Naive thymus-derived CD4-positive, alpha-beta T cell (primary cell): ENCODE measurements at regions of chr5 and their contacts with region 1.

Region 1: GRCh38 chr5:80960531-80961375 is 590 bp downstream of the RASGRF2 start:
- DNase-seq: peak in 8 of 9 donors; percentile 23 to 67 (median 50)
- ATAC-seq: peak; percentile 53
- H3K4me3 ChIP-seq: peak overlapping the region; percentile 85
- H3K4me3 Mint-ChIP-seq: peak overlapping the region; percentile 87 to 99 (median 94)
- H3K27ac ChIP-seq: peak overlapping the region; percentile 70
- H3K27ac Mint-ChIP-seq: peak overlapping the region; percentile 79 to 98 (median 88)
- H3K4me1 ChIP-seq: peaks cover 22 to 35% of the 10 kb centered on the region in 2 donors
- H3K4me1 Mint-ChIP-seq: peaks cover 35 to 76% (median 63%) of the 10 kb centered on the region in 7 donors
- H3K27me3 ChIP-seq: no peaks in the 10 kb centered on the region
- H3K27me3 Mint-ChIP-seq: peaks cover 0 to 12% (median 5%) of the 10 kb centered on the region in 5 donors

Region 2: GRCh38 chr5:80231243-80231642 is 729.5 kb before region 1 on chr5:
- CTCF ChIA-PET with region 1: no interaction called
- POLR2A ChIA-PET with region 1: no interaction called
- intact Hi-C with region 1: no loop called
- DNase-seq: no peak
- ATAC-seq: no peak
- H3K4me3 ChIP-seq: no peak overlapping the region
- H3K4me3 Mint-ChIP-seq: peak overlapping the region in 8 of 10 donors; percentile 21 to 67 (median 52)
- H3K27ac ChIP-seq: peak overlapping the region; percentile 29
- H3K27ac Mint-ChIP-seq: peak overlapping the region in 7 of 9 donors; percentile 18 to 91 (median 74)
- H3K4me1 ChIP-seq: peaks cover 12 to 51% of the 10 kb centered on the region in 2 donors
- H3K4me1 Mint-ChIP-seq: peaks cover 51 to 92% (median 76%) of the 10 kb centered on the region in 7 donors
- H3K27me3 ChIP-seq: no peaks in the 10 kb centered on the region
- H3K27me3 Mint-ChIP-seq: no peaks in the 10 kb centered on the region

Region 3: DNA sequence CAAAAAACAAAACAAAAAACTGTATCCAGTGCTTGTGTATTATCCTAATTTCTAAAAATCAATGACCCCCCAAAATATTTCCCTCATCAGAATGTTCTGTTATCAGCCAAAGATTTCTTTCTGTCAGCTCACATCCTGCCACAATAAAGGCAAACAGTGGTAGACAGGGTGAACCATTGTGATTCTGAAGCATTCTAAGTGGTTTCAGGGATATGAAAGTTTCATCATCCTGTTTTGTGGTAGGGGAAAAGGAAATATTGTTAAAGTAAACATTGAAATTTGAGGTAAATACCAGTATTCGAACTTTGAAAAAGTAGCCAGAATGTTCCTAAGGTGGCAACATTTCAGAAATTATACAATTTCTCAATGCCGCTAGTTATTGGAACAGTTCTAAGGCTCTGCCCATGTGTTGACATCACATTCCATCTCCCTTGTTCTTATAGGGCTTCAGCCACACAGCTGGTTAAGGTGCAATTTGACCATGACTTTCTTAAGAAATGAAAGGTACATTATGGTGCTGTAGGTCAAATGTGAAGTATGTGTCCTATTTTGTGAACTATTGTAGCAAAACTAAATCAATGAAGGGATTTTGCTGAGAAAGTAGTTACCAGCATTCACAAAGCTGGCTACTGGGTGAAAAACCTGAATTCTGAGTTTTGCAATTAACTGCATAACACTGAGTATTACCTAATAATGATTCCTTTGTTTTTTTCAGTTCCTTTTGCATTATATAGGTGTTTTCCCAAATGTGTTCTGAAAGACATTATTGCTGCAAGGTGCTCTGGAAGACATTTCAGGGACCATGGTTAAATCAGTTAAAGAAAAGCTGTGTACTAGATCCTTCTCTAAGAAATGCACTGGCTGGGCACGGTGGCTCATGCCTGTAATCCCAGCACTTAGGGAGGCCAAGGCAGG is 108.2 kb before region 1 on chr5:
- CTCF ChIA-PET with region 1: no interaction called
- POLR2A ChIA-PET with region 1: no interaction called
- intact Hi-C with region 1: no loop called
- DNase-seq: no peak
- ATAC-seq: no peak
- H3K4me3 ChIP-seq: no peak overlapping the region
- H3K4me3 Mint-ChIP-seq: peak overlapping the region in 1 of 10 donors; percentile 11
- H3K27ac ChIP-seq: no peak overlapping the region
- H3K27ac Mint-ChIP-seq: peak overlapping the region in 2 of 9 donors; percentile 7 to 73
- H3K4me1 ChIP-seq: peaks cover 0 to 5% of the 10 kb centered on the region in 2 donors
- H3K4me1 Mint-ChIP-seq: peaks cover 0 to 21% (median 16%) of the 10 kb centered on the region in 7 donors
- H3K27me3 ChIP-seq: no peaks in the 10 kb centered on the region
- H3K27me3 Mint-ChIP-seq: no peaks in the 10 kb centered on the region

Region 4: DNA sequence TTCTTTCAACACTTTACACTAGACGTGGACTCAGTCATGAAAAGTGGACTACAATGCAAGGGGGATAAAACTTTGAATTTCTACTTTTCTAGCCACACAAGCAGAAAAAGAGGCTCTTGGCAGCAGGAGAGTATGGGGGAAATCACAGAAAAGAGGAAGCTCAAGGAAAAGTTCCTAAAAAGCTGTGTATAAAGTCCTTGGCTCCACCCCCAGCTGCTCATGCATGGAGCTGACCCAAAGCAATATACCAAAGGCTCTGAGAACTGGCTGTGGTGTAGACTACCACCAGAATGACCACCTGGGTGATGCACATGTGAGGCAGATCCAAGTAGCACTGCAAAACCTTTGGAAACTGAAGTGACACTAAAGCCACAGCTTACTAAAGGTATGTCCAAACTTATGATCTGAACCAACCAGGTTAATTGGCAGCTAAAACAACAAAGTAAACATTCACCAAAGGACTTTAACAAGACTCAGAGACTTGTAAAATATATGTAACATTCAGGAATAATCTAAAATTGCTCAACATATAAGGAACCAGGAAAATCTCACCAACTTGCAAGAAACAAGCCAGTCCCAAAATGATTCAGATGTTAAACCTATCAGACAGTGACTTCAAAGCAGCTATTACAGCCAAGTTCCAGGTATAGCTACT is 56.1 kb before region 1 on chr5:
- CTCF ChIA-PET with region 1: no interaction called
- POLR2A ChIA-PET with region 1: no interaction called
- intact Hi-C with region 1: no loop called
- DNase-seq: no peak
- ATAC-seq: no peak
- H3K4me3 ChIP-seq: no peak overlapping the region
- H3K4me3 Mint-ChIP-seq: no peak overlapping the region
- H3K27ac ChIP-seq: no peak overlapping the region
- H3K27ac Mint-ChIP-seq: no peak overlapping the region
- H3K4me1 ChIP-seq: no peaks in the 10 kb centered on the region
- H3K4me1 Mint-ChIP-seq: no peaks in the 10 kb centered on the region
- H3K27me3 ChIP-seq: no peaks in the 10 kb centered on the region
- H3K27me3 Mint-ChIP-seq: no peaks in the 10 kb centered on the region

Region 5: DNA sequence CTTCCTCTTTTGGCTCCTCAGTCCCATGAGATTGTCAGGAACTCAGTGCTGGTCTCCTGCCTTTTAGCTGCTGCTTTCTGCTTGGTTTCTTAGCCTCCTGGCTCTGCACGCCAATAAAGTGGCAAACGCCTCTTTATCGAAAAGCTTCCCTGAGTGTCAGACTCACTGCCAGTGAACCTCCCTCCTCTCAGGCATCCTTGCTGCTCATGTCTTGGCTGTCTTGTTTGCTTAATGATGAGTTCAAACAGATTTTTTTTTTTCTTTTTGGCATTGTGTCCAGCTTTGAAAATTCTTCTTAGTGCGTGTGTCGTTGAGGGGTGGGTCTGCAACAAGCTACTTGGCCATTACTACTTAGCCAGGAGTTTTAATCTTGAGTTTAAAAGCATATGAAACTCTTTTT is 14.3 kb after region 1 on chr5:
- CTCF ChIA-PET with region 1: no interaction called
- POLR2A ChIA-PET with region 1: interaction called, 3 read pairs
- intact Hi-C with region 1: loop called in 1 of 2 experiments (anchors 1 kb)
- DNase-seq: no peak
- ATAC-seq: no peak
- H3K4me3 ChIP-seq: no peak overlapping the region
- H3K4me3 Mint-ChIP-seq: peak overlapping the region in 5 of 10 donors; percentile 2 to 74 (median 8)
- H3K27ac ChIP-seq: no peak overlapping the region
- H3K27ac Mint-ChIP-seq: peak overlapping the region in 6 of 9 donors; percentile 20 to 86 (median 52)
- H3K4me1 ChIP-seq: peaks cover 11 to 47% of the 10 kb centered on the region in 2 donors
- H3K4me1 Mint-ChIP-seq: peaks cover 22 to 91% (median 84%) of the 10 kb centered on the region in 7 donors
- H3K27me3 ChIP-seq: no peaks in the 10 kb centered on the region
- H3K27me3 Mint-ChIP-seq: no peaks in the 10 kb centered on the region

Region 6: DNA sequence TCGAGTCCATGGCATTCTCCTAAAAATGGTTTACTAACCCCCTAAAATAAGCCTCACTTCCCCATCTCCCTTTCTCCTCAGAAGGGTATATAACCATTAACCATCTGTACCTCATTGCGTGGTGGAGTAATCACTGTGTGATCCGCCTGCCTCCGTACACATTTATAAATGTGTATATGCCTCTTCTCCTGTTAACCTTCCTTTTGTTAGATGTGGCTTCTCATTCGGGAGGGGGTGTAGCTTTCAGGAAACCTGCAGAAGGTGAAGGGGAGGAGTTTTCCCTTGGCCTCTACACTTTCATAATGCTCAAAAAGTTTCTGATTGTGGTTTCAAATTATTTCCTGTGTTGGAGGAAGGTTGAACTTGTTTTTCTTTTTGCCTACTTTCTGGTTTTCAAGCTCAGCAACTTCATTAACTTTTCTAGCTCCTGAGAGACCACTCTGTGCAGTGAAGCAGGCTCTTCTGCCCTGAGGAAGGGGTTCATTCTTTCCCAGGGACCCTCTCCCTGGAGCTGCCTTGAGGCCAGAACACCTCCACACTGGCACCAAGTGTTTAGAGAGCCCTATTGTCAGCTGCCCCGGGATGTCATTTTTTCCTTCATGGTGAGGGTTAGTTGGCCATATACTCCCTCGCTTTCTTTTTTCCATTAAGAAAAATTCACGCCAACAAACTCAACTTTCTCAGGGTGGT is 46.3 kb after region 1 on chr5:
- CTCF ChIA-PET with region 1: interaction called, 12 read pairs
- POLR2A ChIA-PET with region 1: interaction called, 25 read pairs
- intact Hi-C with region 1: loop called (anchors 1 kb)
- DNase-seq: peak in 8 of 9 donors; percentile 48 to 91 (median 88)
- ATAC-seq: peak; percentile 95
- H3K4me3 ChIP-seq: peak overlapping the region; percentile 53
- H3K4me3 Mint-ChIP-seq: peak overlapping the region; percentile 75 to 95 (median 89)
- H3K27ac ChIP-seq: peak overlapping the region; percentile 80
- H3K27ac Mint-ChIP-seq: peak overlapping the region; percentile 92 to 100 (median 95)
- H3K4me1 ChIP-seq: peaks cover 35 to 64% of the 10 kb centered on the region in 2 donors
- H3K4me1 Mint-ChIP-seq: peaks cover 45 to 93% (median 80%) of the 10 kb centered on the region in 7 donors
- H3K27me3 ChIP-seq: no peaks in the 10 kb centered on the region
- H3K27me3 Mint-ChIP-seq: no peaks in the 10 kb centered on the region

Region 7: GRCh38 chr5:81093537-81094196 is 132.9 kb after region 1 on chr5:
- CTCF ChIA-PET with region 1: no interaction called
- POLR2A ChIA-PET with region 1: no interaction called
- intact Hi-C with region 1: loop called in 1 of 2 experiments (anchors 5 kb)
- DNase-seq: peak in 2 of 9 donors; percentile 4 to 8
- ATAC-seq: no peak
- H3K4me3 ChIP-seq: no peak overlapping the region
- H3K4me3 Mint-ChIP-seq: no peak overlapping the region
- H3K27ac ChIP-seq: no peak overlapping the region
- H3K27ac Mint-ChIP-seq: peak overlapping the region in 3 of 9 donors; percentile 46 to 61 (median 48)
- H3K4me1 ChIP-seq: no peaks in the 10 kb centered on the region
- H3K4me1 Mint-ChIP-seq: peaks cover 0 to 10% (median 4%) of the 10 kb centered on the region in 7 donors
- H3K27me3 ChIP-seq: no peaks in the 10 kb centered on the region
- H3K27me3 Mint-ChIP-seq: no peaks in the 10 kb centered on the region

Region 8: GRCh38 chr5:81194633-81195333 is 234.0 kb after region 1 on chr5:
- CTCF ChIA-PET with region 1: interaction called, 3 read pairs
- POLR2A ChIA-PET with region 1: no interaction called
- intact Hi-C with region 1: loop called in 1 of 2 experiments (anchors 2 kb)
- DNase-seq: peak; percentile 58 to 83 (median 74)
- ATAC-seq: peak; percentile 98
- H3K4me3 ChIP-seq: no peak overlapping the region
- H3K4me3 Mint-ChIP-seq: peak overlapping the region in 8 of 10 donors; percentile 21 to 65 (median 47)
- H3K27ac ChIP-seq: no peak overlapping the region
- H3K27ac Mint-ChIP-seq: peak overlapping the region in 7 of 9 donors; percentile 21 to 82 (median 68)
- H3K4me1 ChIP-seq: peaks cover 0 to 6% of the 10 kb centered on the region in 2 donors
- H3K4me1 Mint-ChIP-seq: peaks cover 3 to 16% (median 9%) of the 10 kb centered on the region in 7 donors
- H3K27me3 ChIP-seq: no peaks in the 10 kb centered on the region
- H3K27me3 Mint-ChIP-seq: no peaks in the 10 kb centered on the region